ENCODE measurements at regions of chr18 and their contacts with region 1.

Region 1: DNA sequence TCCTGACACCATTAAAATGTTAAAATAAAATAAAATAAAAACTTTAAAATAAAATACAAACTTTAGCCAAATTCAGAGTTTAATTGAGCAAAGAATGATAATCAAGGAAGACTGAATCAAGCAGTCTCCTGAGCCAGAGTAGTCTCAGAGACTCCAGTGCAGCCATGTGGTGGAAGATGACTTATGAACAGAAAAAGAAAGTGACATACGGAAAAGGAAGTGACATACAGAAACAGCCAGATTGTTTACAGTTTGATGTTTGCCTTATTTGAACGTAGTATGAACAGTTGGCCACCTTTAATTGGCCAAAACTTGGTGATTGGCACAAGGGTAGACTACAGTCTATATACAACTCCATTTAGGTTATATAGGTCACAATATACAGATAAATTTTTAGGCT is 787.2 kb downstream of the ADCYAP1 start:
- DNase-seq: no peak
- ATAC-seq: no peak
- H3K4me3 ChIP-seq: no peak overlapping the region
- H3K27ac ChIP-seq: no peak overlapping the region
- H3K4me1 ChIP-seq: no peaks in the 10 kb centered on the region
- H3K27me3 ChIP-seq: no peaks in the 10 kb centered on the region

Region 2: GRCh38 chr18:1732143-1732542 is 40.3 kb after region 1 on chr18:
- intact Hi-C with region 1: loop called in 1 of 4 experiments (anchors 5 kb)
- DNase-seq: no peak
- ATAC-seq: no peak
- H3K4me3 ChIP-seq: no peak overlapping the region
- H3K27ac ChIP-seq: no peak overlapping the region
- H3K4me1 ChIP-seq: no peaks in the 10 kb centered on the region
- H3K27me3 ChIP-seq: no peaks in the 10 kb centered on the region